K562 (cell line): ENCODE measurements at regions of chr12 and their contacts with region 1.

Region 1: DNA sequence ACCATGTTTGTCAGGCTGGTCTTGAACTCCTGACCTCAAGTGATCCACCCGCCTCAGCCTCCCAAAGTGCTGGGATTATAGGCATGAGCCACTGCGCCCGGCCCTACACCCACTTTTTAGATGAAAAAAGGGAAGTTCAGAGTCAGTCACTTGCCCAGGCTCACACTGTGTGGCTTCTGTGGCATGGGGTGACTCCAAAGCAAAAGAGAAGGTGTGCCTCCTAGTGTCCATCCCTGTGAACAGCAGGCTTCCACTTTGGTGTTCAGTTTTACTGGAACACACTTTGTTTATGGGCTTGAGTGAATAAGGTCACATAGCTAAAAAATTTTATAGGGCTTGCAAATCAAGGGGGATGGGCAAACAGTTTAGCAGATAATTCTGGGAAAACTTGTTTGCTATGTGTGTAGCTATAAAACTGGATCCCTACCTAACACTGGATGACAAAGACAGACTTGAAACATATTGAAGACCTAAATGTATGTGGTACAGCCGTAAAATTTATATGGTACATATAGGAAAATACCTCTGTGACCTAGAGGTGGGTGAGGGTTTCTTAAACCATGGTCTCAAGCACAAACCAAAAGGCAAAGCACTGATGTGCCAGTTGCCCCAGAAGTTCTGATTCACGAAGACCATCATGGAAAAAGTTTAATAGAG is 54.9 kb downstream of the EID3 start:
- DNase-seq: peak; percentile 66 to 78 (median 69)
- ATAC-seq: peak; percentile 86
- H3K4me3 ChIP-seq: no peak overlapping the region
- H3K27ac ChIP-seq: no peak overlapping the region
- H3K4me1 ChIP-seq: no peaks in the 10 kb centered on the region; a peak in 1 of 5 replicates
- H3K27me3 ChIP-seq: no peaks in the 10 kb centered on the region; a peak in 1 of 5 replicates
- CTCF ChIP-seq: peak; percentile 87 to 91 (median 89)
- EP300 ChIP-seq: no peak
- POLR2A ChIP-seq: no peak
- RAD21 ChIP-seq: peak; percentile 91 to 96

Region 2: DNA sequence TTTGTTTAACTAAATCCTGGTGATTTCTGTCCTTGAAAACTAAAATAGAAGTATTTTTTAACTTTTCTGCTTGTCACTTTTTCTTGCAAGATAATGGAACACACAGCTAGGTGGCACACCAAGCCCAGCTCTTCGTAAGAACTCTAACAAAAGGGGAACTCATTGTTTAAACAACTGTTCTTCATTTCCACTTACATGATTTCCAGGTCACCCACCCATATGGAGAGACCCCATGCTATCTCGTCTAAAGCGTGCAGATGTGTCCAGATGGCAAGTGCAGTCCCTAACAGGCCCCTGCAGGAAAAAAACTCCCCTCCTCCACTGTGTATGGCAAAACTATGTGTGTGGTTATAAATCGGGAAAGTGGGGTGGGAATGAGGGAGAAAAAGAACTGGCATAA is 474.2 kb before region 1 on chr12:
- CTCF ChIA-PET with region 1: no interaction called
- POLR2A ChIA-PET with region 1: no interaction called
- in situ Hi-C with region 1: no loop called
- intact Hi-C with region 1: loop called (anchors 5 kb)
- DNase-seq: peak in 3 of 4 experiments; percentile 24 to 30 (median 25)
- ATAC-seq: 0 out of 3 replicates have a peak, but pooled peaks have one; percentile 38
- H3K4me3 ChIP-seq: no peak overlapping the region
- H3K27ac ChIP-seq: no peak overlapping the region
- H3K4me1 ChIP-seq: no peaks in the 10 kb centered on the region
- H3K27me3 ChIP-seq: peaks cover 9 to 21% of the 10 kb centered on the region in 2 experiments; a peak in 3 of 5 replicates
- CTCF ChIP-seq: peak; percentile 18 to 70 (median 48); a peak in 3 of 6 replicates
- EP300 ChIP-seq: no peak
- POLR2A ChIP-seq: no peak
- RAD21 ChIP-seq: peak; percentile 73 to 75

Region 3: DNA sequence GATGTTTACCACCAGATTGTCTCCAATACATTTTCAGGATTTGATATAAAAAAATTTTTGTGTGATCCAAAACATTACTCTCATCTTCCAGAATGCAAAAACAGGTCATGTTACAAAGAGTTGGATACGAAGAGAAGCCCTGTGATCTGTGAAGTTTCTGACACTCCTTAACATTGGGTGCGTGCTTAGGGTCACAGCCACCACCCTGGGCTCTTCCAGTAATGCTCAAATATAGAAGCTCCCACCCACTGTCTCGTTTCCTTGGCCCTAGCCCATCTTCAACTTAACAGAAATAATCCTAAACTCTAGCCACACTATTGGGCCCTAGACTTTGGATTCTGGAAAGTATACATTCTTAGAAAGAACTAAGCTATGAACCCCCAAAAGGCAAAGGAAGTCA is 461.2 kb before region 1 on chr12:
- CTCF ChIA-PET with region 1: no interaction called
- POLR2A ChIA-PET with region 1: no interaction called
- in situ Hi-C with region 1: loop called (anchors 10 kb)
- intact Hi-C with region 1: no loop called
- DNase-seq: no peak
- ATAC-seq: no peak
- H3K4me3 ChIP-seq: no peak overlapping the region
- H3K27ac ChIP-seq: no peak overlapping the region
- H3K4me1 ChIP-seq: no peaks in the 10 kb centered on the region
- H3K27me3 ChIP-seq: peaks cover 13 to 30% of the 10 kb centered on the region in 2 experiments; a peak in 4 of 5 replicates
- CTCF ChIP-seq: no peak
- EP300 ChIP-seq: no peak
- POLR2A ChIP-seq: no peak
- RAD21 ChIP-seq: no peak

Region 4: DNA sequence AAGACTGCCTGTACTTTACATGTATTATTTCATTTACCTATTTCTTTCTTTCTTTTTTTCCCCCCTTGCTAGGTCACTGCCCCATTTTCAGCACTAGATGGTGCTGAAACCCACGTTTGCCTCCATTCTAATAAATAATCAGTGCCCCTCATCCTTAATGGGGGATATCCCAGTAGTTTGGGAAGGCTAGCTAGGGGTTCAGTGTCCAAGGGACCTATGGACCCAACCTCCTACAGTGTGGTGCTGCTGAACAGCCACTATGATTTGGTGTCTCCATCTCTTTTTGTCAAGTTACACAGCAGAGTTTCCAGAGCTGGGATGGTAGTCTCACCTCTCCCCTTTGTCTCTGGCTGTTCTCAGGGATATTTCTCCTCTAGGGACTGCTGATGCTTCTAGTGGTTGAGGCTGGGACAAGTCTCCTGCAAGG is 300.7 kb before region 1 on chr12:
- CTCF ChIA-PET with region 1: no interaction called
- POLR2A ChIA-PET with region 1: no interaction called
- in situ Hi-C with region 1: no loop called
- intact Hi-C with region 1: loop called (anchors 10 kb)
- DNase-seq: peak; percentile 19 to 35 (median 28)
- ATAC-seq: peak; percentile 77
- H3K4me3 ChIP-seq: no peak overlapping the region
- H3K27ac ChIP-seq: no peak overlapping the region
- H3K4me1 ChIP-seq: no peaks in the 10 kb centered on the region
- H3K27me3 ChIP-seq: peaks cover 13 to 25% of the 10 kb centered on the region in 2 experiments; a peak in 4 of 5 replicates
- CTCF ChIP-seq: peak; percentile 63 to 81 (median 75)
- EP300 ChIP-seq: no peak
- POLR2A ChIP-seq: no peak
- RAD21 ChIP-seq: peak; percentile 50 to 78

Region 5: GRCh38 chr12:104126548-104126947 is 231.9 kb before region 1 on chr12:
- CTCF ChIA-PET with region 1: no interaction called
- POLR2A ChIA-PET with region 1: no interaction called
- in situ Hi-C with region 1: no loop called
- intact Hi-C with region 1: no loop called
- DNase-seq: no peak
- ATAC-seq: no peak
- H3K4me3 ChIP-seq: no peak overlapping the region
- H3K27ac ChIP-seq: no peak overlapping the region
- H3K4me1 ChIP-seq: no peaks in the 10 kb centered on the region
- H3K27me3 ChIP-seq: no peaks in the 10 kb centered on the region
- CTCF ChIP-seq: no peak
- EP300 ChIP-seq: no peak
- POLR2A ChIP-seq: no peak
- RAD21 ChIP-seq: no peak

Region 6: GRCh38 chr12:104201238-104202001 is 157.1 kb before region 1 on chr12:
- CTCF ChIA-PET with region 1: interaction called, 17 read pairs
- POLR2A ChIA-PET with region 1: no interaction called
- in situ Hi-C with region 1: loop called (anchors 5 kb)
- intact Hi-C with region 1: loop called (anchors 1 kb)
- DNase-seq: peak; percentile 61 to 71 (median 63)
- ATAC-seq: peak; percentile 91
- H3K4me3 ChIP-seq: no peak overlapping the region
- H3K27ac ChIP-seq: no peak overlapping the region
- H3K4me1 ChIP-seq: no peaks in the 10 kb centered on the region
- H3K27me3 ChIP-seq: peaks cover 0 to 8% of the 10 kb centered on the region in 2 experiments; a peak in 2 of 5 replicates
- CTCF ChIP-seq: peak; percentile 76 to 90 (median 88)
- EP300 ChIP-seq: no peak
- POLR2A ChIP-seq: no peak
- RAD21 ChIP-seq: peak; percentile 90 to 93

Region 7: DNA sequence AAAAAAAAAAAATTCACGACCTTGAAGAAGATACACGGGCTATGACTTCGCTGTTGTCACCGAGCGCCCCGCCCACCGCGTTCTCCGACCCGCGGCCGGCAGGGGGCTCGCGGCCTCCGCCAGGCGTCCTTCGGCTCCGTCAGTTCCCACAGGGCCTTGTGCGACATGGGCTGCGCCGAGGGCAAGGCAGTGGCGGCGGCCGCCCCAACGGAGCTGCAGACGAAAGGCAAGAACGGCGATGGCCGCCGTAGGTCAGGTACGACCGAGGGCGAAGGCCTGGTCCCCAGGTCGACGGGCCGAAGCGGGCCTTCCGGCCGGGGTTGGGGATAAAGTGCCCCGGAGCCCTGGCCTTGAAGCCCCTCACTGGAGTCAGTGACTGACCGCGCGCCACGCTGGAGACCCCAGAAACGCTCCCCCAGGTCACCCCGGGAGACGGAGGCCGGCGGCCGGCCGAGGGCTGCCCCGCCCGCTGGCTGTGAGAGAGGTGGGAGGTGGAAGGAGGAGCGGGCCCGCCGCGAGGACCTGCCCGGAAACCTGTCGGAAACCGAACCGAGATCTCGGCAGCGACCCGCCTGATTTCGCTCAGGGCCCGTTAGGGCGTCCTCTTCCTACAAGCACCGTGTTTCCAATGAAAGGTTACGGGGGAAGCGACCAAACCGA is 142.7 kb before region 1 on chr12 and contains the start of gene TXNRD1:
- CTCF ChIA-PET with region 1: interaction called, 14 read pairs
- POLR2A ChIA-PET with region 1: no interaction called
- in situ Hi-C with region 1: no loop called
- intact Hi-C with region 1: loop called (anchors 1 kb)
- DNase-seq: peak; percentile 84 to 90 (median 86)
- ATAC-seq: peak; percentile 99
- H3K4me3 ChIP-seq: peak within 1 kb of the TSS; percentile 20
- H3K27ac ChIP-seq: peak within 1 kb of the TSS; percentile 13; the same call in 1 of the 3 replicates
- H3K4me1 ChIP-seq: peaks cover 11% of the 10 kb centered on the region in 2 experiments; a peak in 4 of 5 replicates
- H3K27me3 ChIP-seq: no peaks in the 10 kb centered on the region; a peak in 1 of 5 replicates
- CTCF ChIP-seq: peak; percentile 92 to 94 (median 93)
- EP300 ChIP-seq: no peak
- POLR2A ChIP-seq: 0 out of 2 replicates have a peak, but pooled peaks have one; percentile 51
- RAD21 ChIP-seq: peak; percentile 90 to 94
- polyA plus RNA-seq, gene TXNRD1: 114 to 189 TPM

Region 8: DNA sequence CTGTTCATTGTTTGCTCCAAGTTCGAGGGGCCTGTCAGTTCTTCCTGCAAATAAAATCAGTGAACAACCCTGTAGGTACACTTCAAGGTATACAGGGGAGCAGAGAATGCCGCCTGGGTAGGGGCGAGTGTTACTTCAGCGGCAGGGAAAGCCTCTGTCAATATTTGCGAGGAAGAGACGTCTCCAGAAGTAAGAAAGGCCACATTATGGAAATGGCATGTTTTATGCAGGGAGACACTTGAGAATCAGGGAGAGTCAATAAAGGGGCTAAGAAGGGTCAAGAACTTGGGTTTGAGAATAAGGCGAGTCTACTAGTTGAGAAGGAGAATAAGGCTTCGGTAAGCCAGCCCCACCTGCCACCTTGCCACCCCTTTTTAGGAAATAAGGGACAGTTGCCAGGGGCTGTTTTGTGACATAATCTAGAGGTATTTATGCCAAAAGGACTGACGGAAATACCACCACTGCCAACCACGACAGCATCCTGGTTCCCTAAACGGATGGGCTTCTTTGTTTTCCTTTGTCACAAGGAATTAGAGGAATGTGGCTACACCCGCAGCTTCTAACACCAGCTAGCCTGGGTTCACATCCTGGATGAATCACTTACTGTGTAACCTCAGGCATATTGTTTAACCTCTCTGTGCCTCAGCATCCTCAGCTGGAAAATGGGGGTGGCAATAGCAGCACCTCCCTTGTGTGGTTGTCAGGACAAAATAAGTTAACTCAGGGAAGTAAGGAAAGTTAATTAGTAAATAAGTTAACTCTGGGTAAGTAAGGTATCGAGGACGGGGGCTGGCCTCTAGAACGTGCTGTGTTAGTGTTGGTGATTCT is 12.8 kb after region 1 on chr12:
- CTCF ChIA-PET with region 1: no interaction called
- POLR2A ChIA-PET with region 1: no interaction called
- in situ Hi-C with region 1: no loop called
- intact Hi-C with region 1: no loop called
- DNase-seq: no peak
- ATAC-seq: no peak
- H3K4me3 ChIP-seq: no peak overlapping the region
- H3K27ac ChIP-seq: no peak overlapping the region
- H3K4me1 ChIP-seq: 0 out of 5 replicates have a peak, but pooled peaks cover 0 to 2% of the 10 kb centered on the region in 2 experiments
- H3K27me3 ChIP-seq: peaks cover 5 to 9% of the 10 kb centered on the region in 2 experiments; a peak in 3 of 5 replicates
- CTCF ChIP-seq: no peak
- EP300 ChIP-seq: no peak
- POLR2A ChIP-seq: no peak
- RAD21 ChIP-seq: no peak

Region 9: GRCh38 chr12:104446646-104447421 is 88.4 kb after region 1 on chr12:
- CTCF ChIA-PET with region 1: no interaction called
- POLR2A ChIA-PET with region 1: no interaction called
- in situ Hi-C with region 1: no loop called
- intact Hi-C with region 1: no loop called
- DNase-seq: no peak
- ATAC-seq: no peak
- H3K4me3 ChIP-seq: no peak overlapping the region
- H3K27ac ChIP-seq: no peak overlapping the region
- H3K4me1 ChIP-seq: no peaks in the 10 kb centered on the region
- H3K27me3 ChIP-seq: no peaks in the 10 kb centered on the region
- CTCF ChIP-seq: no peak
- EP300 ChIP-seq: no peak
- POLR2A ChIP-seq: no peak
- RAD21 ChIP-seq: no peak

Region 10: GRCh38 chr12:105330283-105330930 is 971.9 kb after region 1 on chr12 and contains the start of gene C12orf75:
- CTCF ChIA-PET with region 1: no interaction called
- POLR2A ChIA-PET with region 1: no interaction called
- in situ Hi-C with region 1: no loop called
- intact Hi-C with region 1: no loop called
- DNase-seq: peak; percentile 40 to 88 (median 80)
- ATAC-seq: peak; percentile 97
- H3K4me3 ChIP-seq: peak within 1 kb of the TSS; percentile 28
- H3K27ac ChIP-seq: no peak within 1 kb of the TSS
- H3K4me1 ChIP-seq: peaks cover 0 to 11% of the 10 kb centered on the region in 2 experiments; a peak in 2 of 5 replicates
- H3K27me3 ChIP-seq: peaks cover 19 to 23% of the 10 kb centered on the region in 2 experiments
- CTCF ChIP-seq: no peak
- EP300 ChIP-seq: no peak
- POLR2A ChIP-seq: no peak
- RAD21 ChIP-seq: no peak
- polyA plus RNA-seq, gene C12orf75: 0.06 TPM in 1 of 2 experiments, not detected in the other

Region 11: DNA sequence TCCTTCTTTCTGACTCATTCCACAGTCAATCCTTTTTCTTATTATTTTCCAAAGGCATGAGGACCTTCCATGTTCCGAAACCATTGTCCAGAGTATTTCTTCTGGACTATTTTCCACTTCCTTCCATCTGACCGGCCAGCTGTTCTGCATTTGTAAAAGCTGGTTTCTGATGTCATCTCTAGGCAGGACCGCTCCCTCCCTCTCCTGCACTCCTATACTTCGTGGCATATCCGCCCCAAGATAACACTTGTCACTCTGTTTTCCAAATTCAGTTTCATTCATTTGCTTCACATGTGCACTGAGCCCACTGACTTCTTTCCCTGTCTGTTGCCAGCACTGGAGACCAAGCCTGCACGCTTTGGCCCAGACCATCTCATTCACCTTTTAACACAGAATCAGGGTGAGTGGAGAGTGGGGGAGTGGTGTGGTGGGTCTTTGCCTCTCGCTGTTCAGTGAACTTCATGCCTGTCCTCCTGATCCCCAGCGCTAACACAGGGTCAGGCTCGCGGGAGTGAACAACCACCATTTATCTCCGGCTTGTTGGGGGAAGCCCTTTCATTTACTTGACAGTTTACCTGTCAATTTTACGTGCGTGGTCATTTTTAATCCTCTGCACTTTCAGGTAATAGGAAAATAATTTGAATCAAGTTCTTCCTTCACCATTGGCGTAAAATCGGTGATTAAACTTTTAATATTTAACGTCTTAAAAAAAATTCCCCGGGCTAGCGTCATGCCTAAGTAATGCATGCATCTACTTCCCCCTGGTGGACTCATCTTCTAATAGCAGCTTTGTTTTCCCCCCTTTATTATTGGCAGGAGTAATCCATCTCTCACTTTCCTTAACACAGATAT is 1024.5 kb after region 1 on chr12:
- CTCF ChIA-PET with region 1: no interaction called
- POLR2A ChIA-PET with region 1: no interaction called
- in situ Hi-C with region 1: loop called (anchors 25 kb)
- intact Hi-C with region 1: no loop called
- DNase-seq: peak; percentile 59 to 63 (median 62)
- ATAC-seq: peak; percentile 88
- H3K4me3 ChIP-seq: no peak overlapping the region
- H3K27ac ChIP-seq: no peak overlapping the region
- H3K4me1 ChIP-seq: peaks cover 0 to 5% of the 10 kb centered on the region in 2 experiments; a peak in 1 of 5 replicates
- H3K27me3 ChIP-seq: peaks cover 0 to 24% of the 10 kb centered on the region in 2 experiments; a peak in 4 of 5 replicates
- CTCF ChIP-seq: peak; percentile 66 to 85 (median 76)
- EP300 ChIP-seq: no peak
- POLR2A ChIP-seq: no peak
- RAD21 ChIP-seq: peak; percentile 84 to 86